HepG2 (cell line): ENCODE measurements at regions of chr20 and their contacts with region 1.

Region 1: DNA sequence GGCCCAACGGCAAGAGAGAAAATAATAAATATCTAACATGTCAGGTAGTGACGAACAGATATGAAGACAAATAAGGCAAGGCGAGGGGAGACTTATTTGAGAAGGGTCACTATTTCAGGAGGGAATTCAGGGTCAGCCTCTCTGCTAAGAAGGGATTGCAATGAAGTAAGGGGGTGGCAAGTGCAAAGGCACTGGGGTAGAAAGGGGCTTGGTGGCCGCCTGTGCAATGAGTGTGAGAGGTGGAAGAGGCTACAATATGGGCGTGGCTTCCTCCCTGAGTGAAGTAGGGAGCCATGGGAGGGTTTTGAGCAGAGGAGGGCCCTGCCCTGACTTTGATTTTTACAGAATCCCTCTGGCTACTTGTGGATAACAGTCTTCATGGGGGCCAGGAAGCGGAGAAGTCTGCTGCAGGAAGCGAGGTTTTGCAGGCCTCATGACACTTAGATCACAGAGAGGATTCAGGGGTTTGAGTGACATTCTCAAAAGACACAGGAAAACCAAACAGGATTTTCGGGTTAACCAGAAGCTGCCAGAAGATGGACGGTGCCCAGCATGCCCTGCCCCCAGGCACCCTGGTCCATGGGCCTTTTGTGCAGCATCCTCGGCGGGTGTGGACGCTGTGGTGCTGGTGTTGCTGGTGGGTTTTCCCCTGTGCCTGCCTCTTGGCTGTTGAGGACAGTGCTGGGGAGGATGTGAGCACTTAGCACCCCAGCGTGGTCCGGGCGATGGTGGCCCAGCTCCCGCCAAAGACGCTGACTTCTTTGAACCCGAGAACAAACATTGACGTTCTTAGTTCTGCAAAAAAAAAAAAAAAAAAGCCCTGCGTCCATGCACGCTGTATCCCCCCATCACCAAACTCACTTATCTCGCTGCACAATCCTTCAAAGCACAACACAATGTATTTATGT is 124.2 kb upstream of the PTPN1 start:
- DNase-seq: no peak
- ATAC-seq: no peak
- H3K4me3 ChIP-seq: no peak overlapping the region
- H3K27ac ChIP-seq: peak overlapping the region; percentile 27
- H3K4me1 ChIP-seq: peaks cover 98% of the 10 kb centered on the region
- H3K27me3 ChIP-seq: no peaks in the 10 kb centered on the region
- CTCF ChIP-seq: no peak
- EP300 ChIP-seq: no peak
- POLR2A ChIP-seq: no peak
- RAD21 ChIP-seq: no peak

Region 2: DNA sequence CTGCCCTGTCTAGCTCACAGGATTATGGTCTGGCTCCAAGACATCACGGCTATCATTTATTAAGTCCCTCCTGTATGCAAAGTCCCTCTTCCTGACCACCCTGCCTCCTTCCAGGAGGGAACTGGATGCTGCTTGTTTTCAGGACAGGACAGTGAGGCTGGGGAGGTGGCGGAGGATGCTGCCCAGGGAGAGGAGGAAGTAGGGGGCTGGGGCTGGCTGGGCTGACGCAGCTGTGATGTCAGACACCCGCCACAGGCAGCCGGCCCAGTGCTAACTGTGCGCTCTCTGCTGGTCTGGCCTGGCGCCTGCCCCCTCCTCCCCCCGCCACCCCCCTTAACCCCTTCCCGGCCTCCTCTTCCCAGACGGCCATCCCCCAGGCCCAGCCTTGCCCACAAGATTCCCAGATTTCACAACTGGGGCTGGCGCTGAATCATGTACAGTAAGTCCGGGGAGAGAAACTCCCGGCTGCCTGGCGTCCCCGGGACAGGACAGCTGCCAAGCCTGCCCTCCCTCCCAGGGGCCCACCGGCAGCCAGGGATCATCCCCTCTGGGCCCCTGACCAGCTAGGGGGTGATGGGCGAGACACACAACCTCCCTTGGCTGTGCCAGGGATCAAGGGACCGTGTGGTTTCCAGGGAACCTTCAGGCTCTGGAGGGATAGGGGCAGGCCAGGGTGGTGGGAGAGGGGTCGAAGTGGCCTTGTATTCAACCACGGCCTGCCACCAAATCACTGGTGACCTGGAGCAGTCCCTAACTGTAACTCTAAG is 77.3 kb before region 1 on chr20:
- CTCF ChIA-PET with region 1: interaction called, 3 read pairs
- POLR2A ChIA-PET with region 1: interaction called, 53 read pairs
- in situ Hi-C with region 1: no loop called
- intact Hi-C with region 1: no loop called
- DNase-seq: peak; percentile 96
- ATAC-seq: peak; percentile 15
- H3K4me3 ChIP-seq: peak overlapping the region; percentile 53 to 78 (median 61)
- H3K27ac ChIP-seq: peak overlapping the region; percentile 75
- H3K4me1 ChIP-seq: peaks cover 66% of the 10 kb centered on the region
- H3K27me3 ChIP-seq: no peaks in the 10 kb centered on the region
- CTCF ChIP-seq: peak; percentile 67
- EP300 ChIP-seq: peak in 1 of 2 experiments; percentile 62; a peak in 3 of 4 replicates
- POLR2A ChIP-seq: peak in 1 of 2 experiments; percentile 11; a peak in 2 of 4 replicates
- RAD21 ChIP-seq: peak; percentile 46

Region 3: GRCh38 chr20:50366270-50367103 is 19.5 kb before region 1 on chr20:
- CTCF ChIA-PET with region 1: no interaction called
- POLR2A ChIA-PET with region 1: interaction called, 44 read pairs
- in situ Hi-C with region 1: no loop called
- intact Hi-C with region 1: loop called (anchors 1 kb)
- DNase-seq: peak; percentile 100
- ATAC-seq: peak; percentile 77
- H3K4me3 ChIP-seq: peak overlapping the region in 2 of 3 experiments; percentile 29 to 31; a peak in 2 of 6 replicates
- H3K27ac ChIP-seq: peak overlapping the region; percentile 71
- H3K4me1 ChIP-seq: peaks cover 87% of the 10 kb centered on the region
- H3K27me3 ChIP-seq: peaks cover 0 to 12% of the 10 kb centered on the region in 2 experiments; a peak in 3 of 5 replicates
- CTCF ChIP-seq: 0 out of 2 replicates have a peak, but pooled peaks have one; percentile 11
- EP300 ChIP-seq: peak; percentile 79 to 93
- POLR2A ChIP-seq: no peak
- RAD21 ChIP-seq: peak; percentile 8; the same call in 1 of the 2 replicates

Region 4: DNA sequence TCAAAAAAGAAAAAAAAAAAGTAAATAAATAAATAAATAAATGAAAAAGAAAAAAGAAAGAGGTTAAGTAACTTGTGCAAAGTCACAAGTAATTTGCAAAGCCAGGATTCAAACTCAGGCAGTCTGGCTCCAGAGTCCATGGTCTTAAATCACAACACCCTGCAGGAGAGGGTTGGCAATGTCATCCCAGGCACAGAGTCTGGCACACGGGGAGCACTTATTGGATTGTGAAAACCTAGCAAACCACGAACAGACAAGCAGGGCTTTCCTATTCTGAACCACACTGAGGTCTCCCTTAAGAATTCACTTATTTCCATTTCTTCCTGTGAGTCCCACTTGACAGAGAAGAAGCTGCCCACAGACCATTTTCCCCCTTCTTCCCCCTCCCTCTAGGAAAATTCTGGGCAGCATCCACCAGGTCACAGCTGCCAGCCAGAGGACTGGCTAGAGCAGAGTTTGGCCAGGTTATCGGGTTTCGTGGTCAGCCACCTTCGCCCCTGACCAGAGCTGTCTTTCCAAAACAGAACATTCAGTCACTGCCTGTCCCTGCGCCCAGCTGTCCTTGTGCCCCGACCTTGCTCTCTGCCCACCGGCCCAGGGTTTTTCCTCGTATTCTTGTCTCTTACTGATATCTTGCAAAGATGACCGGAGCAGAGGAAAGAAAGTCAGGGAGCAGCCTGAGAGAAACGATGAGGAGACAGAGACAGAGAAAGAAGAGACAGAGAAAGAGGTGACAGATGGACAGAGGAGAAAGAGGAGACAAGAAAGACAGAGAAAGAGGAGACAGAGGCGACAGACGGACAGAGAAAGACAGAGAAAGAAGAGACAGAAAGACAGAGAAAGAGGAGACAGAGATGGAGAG is 17.8 kb after region 1 on chr20:
- CTCF ChIA-PET with region 1: no interaction called
- POLR2A ChIA-PET with region 1: interaction called, 299 read pairs
- in situ Hi-C with region 1: no loop called
- intact Hi-C with region 1: loop called (anchors 1 kb)
- DNase-seq: no peak
- ATAC-seq: no peak
- H3K4me3 ChIP-seq: no peak overlapping the region
- H3K27ac ChIP-seq: peak overlapping the region; percentile 85
- H3K4me1 ChIP-seq: peaks cover 100% of the 10 kb centered on the region
- H3K27me3 ChIP-seq: no peaks in the 10 kb centered on the region
- CTCF ChIP-seq: no peak
- EP300 ChIP-seq: 0 out of 4 replicates have a peak, but pooled peaks of 1 of the 2 experiments have one; percentile 7
- POLR2A ChIP-seq: no peak
- RAD21 ChIP-seq: no peak

Region 5: GRCh38 chr20:50425085-50425484 is 39.1 kb after region 1 on chr20:
- CTCF ChIA-PET with region 1: interaction called, 3 read pairs
- POLR2A ChIA-PET with region 1: interaction called, 28 read pairs
- in situ Hi-C with region 1: no loop called
- intact Hi-C with region 1: no loop called
- DNase-seq: peak; percentile 61
- ATAC-seq: peak; percentile 12; the same call in 2 of the 3 replicates
- H3K4me3 ChIP-seq: no peak overlapping the region
- H3K27ac ChIP-seq: no peak overlapping the region
- H3K4me1 ChIP-seq: peaks cover 84% of the 10 kb centered on the region
- H3K27me3 ChIP-seq: no peaks in the 10 kb centered on the region
- CTCF ChIP-seq: no peak
- EP300 ChIP-seq: no peak
- POLR2A ChIP-seq: no peak
- RAD21 ChIP-seq: no peak

Region 6: GRCh38 chr20:50460460-50461267 is 74.7 kb after region 1 on chr20:
- CTCF ChIA-PET with region 1: interaction called, 5 read pairs
- POLR2A ChIA-PET with region 1: interaction called, 26 read pairs
- in situ Hi-C with region 1: no loop called
- intact Hi-C with region 1: no loop called
- DNase-seq: peak; percentile 91
- ATAC-seq: peak; percentile 85
- H3K4me3 ChIP-seq: peak overlapping the region; percentile 15 to 64 (median 35); a peak in 5 of 6 replicates
- H3K27ac ChIP-seq: peak overlapping the region; percentile 45
- H3K4me1 ChIP-seq: peaks cover 89% of the 10 kb centered on the region
- H3K27me3 ChIP-seq: no peaks in the 10 kb centered on the region
- CTCF ChIP-seq: peak; percentile 100
- EP300 ChIP-seq: peak in 1 of 2 experiments; percentile 60; a peak in 3 of 4 replicates
- POLR2A ChIP-seq: peak in 1 of 2 experiments; percentile 28; a peak in 1 of 4 replicates
- RAD21 ChIP-seq: peak; percentile 100

Region 7: DNA sequence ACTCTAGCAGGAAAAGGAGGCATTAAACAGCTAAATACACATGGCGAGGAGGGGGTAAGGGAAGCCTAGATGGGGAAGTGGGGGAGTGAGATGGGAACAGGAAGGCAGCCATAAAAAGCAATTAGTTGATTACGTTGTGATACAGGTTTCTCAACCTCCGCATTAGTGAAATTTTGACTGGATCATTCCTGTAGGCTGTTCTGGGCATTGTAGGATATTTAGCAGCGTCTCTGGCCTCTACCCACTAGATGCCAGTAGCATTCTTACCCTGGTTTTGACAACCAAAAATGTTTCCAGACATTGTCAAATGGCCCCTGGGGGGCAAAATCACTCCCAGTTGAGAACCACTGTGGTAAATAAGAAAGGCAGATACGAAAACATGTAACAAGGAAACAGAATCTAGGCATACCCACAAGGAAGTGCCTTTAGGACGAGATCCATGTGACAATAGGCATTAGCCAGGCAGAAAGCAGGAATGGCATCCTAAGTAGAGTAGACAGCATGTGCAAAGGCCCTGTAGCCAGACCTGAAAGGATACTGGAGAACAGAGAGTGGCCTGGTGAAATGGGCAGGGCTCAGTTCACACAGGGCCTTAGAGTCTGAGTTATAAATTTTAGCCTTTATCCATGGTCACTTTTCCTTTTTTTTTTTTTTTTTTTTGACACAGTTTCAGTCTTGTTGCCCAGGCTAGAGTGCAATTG is 98.4 kb after region 1 on chr20:
- CTCF ChIA-PET with region 1: no interaction called
- POLR2A ChIA-PET with region 1: no interaction called
- in situ Hi-C with region 1: no loop called
- intact Hi-C with region 1: no loop called
- DNase-seq: no peak
- ATAC-seq: no peak
- H3K4me3 ChIP-seq: peak overlapping the region in 2 of 3 experiments; percentile 54 to 69; a peak in 2 of 6 replicates
- H3K27ac ChIP-seq: no peak overlapping the region
- H3K4me1 ChIP-seq: peaks cover 25% of the 10 kb centered on the region
- H3K27me3 ChIP-seq: peaks cover 0 to 15% of the 10 kb centered on the region in 2 experiments; a peak in 2 of 5 replicates
- CTCF ChIP-seq: no peak
- EP300 ChIP-seq: no peak
- POLR2A ChIP-seq: no peak
- RAD21 ChIP-seq: no peak